Sigmoid colon (tissue), 7 donors: ENCODE measurements at regions of chr20 and their contacts with region 1.

Region 1: GRCh38 chr20:63178889-63179686 is 36.8 kb downstream of the YTHDF1 start:
- DNase-seq: no peak
- H3K4me3 ChIP-seq: peak overlapping the region in 3 of 4 donors; percentile 5 to 31 (median 16)
- H3K27ac ChIP-seq: no peak overlapping the region
- H3K4me1 ChIP-seq: peaks cover 0 to 50% (median 35%) of the 10 kb centered on the region in 4 donors
- H3K27me3 ChIP-seq: peaks cover 56 to 90% (median 80%) of the 10 kb centered on the region in 3 donors
- CTCF ChIP-seq: peak in 1 of 4 experiments; percentile 44
- EP300 ChIP-seq: no peak
- POLR2A ChIP-seq: no peak

Region 2: GRCh38 chr20:62953839-62954703 is 225.0 kb before region 1 on chr20:
- intact Hi-C with region 1: no loop called
- DNase-seq: peak; percentile 94
- H3K4me3 ChIP-seq: peak overlapping the region; percentile 6 to 50 (median 32)
- H3K27ac ChIP-seq: peak overlapping the region; percentile 86 to 97 (median 90)
- H3K4me1 ChIP-seq: peaks cover 0 to 32% (median 30%) of the 10 kb centered on the region in 4 donors
- H3K27me3 ChIP-seq: no peaks in the 10 kb centered on the region
- CTCF ChIP-seq: no peak
- EP300 ChIP-seq: no peak
- POLR2A ChIP-seq: no peak

Region 3: GRCh38 chr20:63230800-63231268 is 51.7 kb after region 1 on chr20:
- intact Hi-C with region 1: loop called (anchors 5 kb)
- DNase-seq: peak; percentile 78
- H3K4me3 ChIP-seq: no peak overlapping the region
- H3K27ac ChIP-seq: no peak overlapping the region
- H3K4me1 ChIP-seq: peaks cover 0 to 4% (median 0%) of the 10 kb centered on the region in 4 donors
- H3K27me3 ChIP-seq: peaks cover 0 to 49% (median 12%) of the 10 kb centered on the region in 3 donors
- CTCF ChIP-seq: peak; percentile 20 to 54 (median 44)
- EP300 ChIP-seq: no peak
- POLR2A ChIP-seq: no peak